Activated CD4-positive, alpha-beta memory T cell treated with anti-CD3 and anti-CD28 coated beads for 36 hours (primary cell): ENCODE measurements at regions of chr12 and their contacts with region 1.

Region 1: GRCh38 chr12:27305673-27306456 is 26.8 kb upstream of the BMAL2 start:
- DNase-seq: no peak
- H3K4me3 Mint-ChIP-seq: no peak overlapping the region
- H3K27ac Mint-ChIP-seq: no peak overlapping the region
- H3K4me1 Mint-ChIP-seq: no peaks in the 10 kb centered on the region
- H3K27me3 Mint-ChIP-seq: no peaks in the 10 kb centered on the region

Region 2: DNA sequence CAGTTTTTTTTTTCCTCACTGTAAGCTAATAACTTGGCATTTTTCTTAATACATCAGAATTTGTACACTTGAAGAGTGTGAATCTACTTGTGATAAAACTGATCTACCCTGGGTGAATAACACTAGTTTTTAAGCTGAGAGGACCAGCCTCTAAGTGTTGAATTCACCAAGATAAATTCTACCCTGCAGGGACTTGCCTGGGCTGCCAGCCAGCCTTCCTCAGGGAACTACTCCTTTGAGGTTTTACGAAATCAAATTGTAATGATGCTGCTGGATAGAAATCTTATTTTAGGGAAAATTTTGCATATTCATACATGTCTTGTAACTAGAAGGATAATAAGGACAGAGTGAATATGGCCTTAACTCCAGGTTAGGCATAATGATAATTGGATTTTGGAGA is 281.6 kb before region 1 on chr12:
- CTCF ChIA-PET with region 1: interaction called, 23 read pairs
- POLR2A ChIA-PET with region 1: interaction called, 3 read pairs
- intact Hi-C with region 1: loop called (anchors 2 kb)
- DNase-seq: no peak
- H3K4me3 Mint-ChIP-seq: no peak overlapping the region
- H3K27ac Mint-ChIP-seq: no peak overlapping the region
- H3K4me1 Mint-ChIP-seq: peaks cover 40% of the 10 kb centered on the region
- H3K27me3 Mint-ChIP-seq: no peaks in the 10 kb centered on the region

Region 3: DNA sequence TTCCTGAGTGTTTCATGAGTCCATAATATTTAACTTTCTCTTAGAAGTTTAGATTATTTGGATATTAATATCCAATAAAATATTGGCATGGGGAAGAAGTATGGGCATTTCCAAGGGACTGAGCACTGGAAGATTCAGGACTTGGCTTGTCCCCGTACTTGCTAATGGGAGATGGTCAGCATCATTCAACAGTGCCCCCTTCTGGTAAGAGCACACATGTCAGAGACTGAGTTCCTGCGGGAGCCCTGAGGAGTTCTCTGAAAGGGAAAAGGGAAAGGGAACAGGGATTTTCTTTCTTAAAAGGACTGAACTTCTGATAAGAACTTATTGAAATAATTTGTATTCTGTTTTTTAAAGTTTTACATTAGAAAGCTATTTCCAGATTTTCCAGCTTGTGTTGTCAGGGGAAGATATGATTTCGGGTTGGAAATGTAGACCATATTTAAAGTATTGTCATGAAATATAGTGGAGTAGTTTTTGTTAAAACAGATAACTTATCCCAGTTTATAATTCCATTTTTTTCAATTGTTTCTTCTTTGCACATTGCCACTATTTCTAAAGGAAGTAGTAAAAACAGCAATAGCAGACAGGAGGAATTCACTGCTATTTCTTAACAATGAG is 163.7 kb before region 1 on chr12:
- CTCF ChIA-PET with region 1: interaction called, 19 read pairs
- POLR2A ChIA-PET with region 1: no interaction called
- intact Hi-C with region 1: loop called (anchors 1 kb)
- DNase-seq: peak; percentile 51
- H3K4me3 Mint-ChIP-seq: no peak overlapping the region
- H3K27ac Mint-ChIP-seq: no peak overlapping the region
- H3K4me1 Mint-ChIP-seq: peaks cover 6% of the 10 kb centered on the region
- H3K27me3 Mint-ChIP-seq: no peaks in the 10 kb centered on the region

Region 4: GRCh38 chr12:27277846-27278260 is 28.0 kb before region 1 on chr12:
- CTCF ChIA-PET with region 1: interaction called, 10 read pairs
- POLR2A ChIA-PET with region 1: no interaction called
- intact Hi-C with region 1: no loop called
- DNase-seq: no peak
- H3K4me3 Mint-ChIP-seq: no peak overlapping the region
- H3K27ac Mint-ChIP-seq: no peak overlapping the region
- H3K4me1 Mint-ChIP-seq: peaks cover 12% of the 10 kb centered on the region
- H3K27me3 Mint-ChIP-seq: no peaks in the 10 kb centered on the region

Region 5: DNA sequence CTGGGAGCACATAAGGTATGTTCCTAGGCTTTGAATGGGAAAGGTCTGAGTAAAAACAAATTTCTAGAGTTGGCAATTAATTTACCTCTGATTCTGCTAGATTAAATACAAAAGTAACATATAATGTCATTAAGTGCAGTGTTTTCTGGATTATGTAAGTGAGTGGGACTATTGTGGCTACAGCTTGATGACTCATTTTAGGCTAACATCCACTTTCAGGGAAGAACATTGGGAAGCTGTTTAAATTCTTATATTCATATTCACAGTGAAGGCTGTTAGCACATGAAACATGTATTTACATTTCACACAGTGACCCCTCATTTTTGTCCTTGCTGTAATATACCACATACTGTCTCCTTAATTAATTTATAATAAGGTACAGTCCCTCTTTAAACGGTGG is 13.5 kb after region 1 on chr12:
- CTCF ChIA-PET with region 1: interaction called, 11 read pairs
- POLR2A ChIA-PET with region 1: no interaction called
- intact Hi-C with region 1: no loop called
- DNase-seq: no peak
- H3K4me3 Mint-ChIP-seq: no peak overlapping the region
- H3K27ac Mint-ChIP-seq: no peak overlapping the region
- H3K4me1 Mint-ChIP-seq: no peaks in the 10 kb centered on the region
- H3K27me3 Mint-ChIP-seq: no peaks in the 10 kb centered on the region

Region 6: GRCh38 chr12:27437839-27438238 is 132.0 kb after region 1 on chr12:
- CTCF ChIA-PET with region 1: no interaction called
- POLR2A ChIA-PET with region 1: no interaction called
- intact Hi-C with region 1: no loop called
- DNase-seq: no peak
- H3K4me3 Mint-ChIP-seq: no peak overlapping the region
- H3K27ac Mint-ChIP-seq: no peak overlapping the region
- H3K4me1 Mint-ChIP-seq: peaks cover 6% of the 10 kb centered on the region
- H3K27me3 Mint-ChIP-seq: peaks cover 12% of the 10 kb centered on the region